SK-N-SH (cell line): ENCODE measurements at regions of chr1 and their contacts with region 1.

Region 1: GRCh38 chr1:214008791-214009620 is 21.2 kb downstream of the PROX1 start:
- DNase-seq: no peak
- H3K4me3 ChIP-seq: no peak overlapping the region
- H3K27ac ChIP-seq: peak overlapping the region; percentile 11 to 100; a peak in 3 of 4 replicates
- H3K4me1 ChIP-seq: peaks cover 0 to 50% of the 10 kb centered on the region in 2 experiments; a peak in 2 of 4 replicates
- H3K27me3 ChIP-seq: no peaks in the 10 kb centered on the region
- CTCF ChIP-seq: no peak
- EP300 ChIP-seq: no peak
- RAD21 ChIP-seq: no peak

Region 2: DNA sequence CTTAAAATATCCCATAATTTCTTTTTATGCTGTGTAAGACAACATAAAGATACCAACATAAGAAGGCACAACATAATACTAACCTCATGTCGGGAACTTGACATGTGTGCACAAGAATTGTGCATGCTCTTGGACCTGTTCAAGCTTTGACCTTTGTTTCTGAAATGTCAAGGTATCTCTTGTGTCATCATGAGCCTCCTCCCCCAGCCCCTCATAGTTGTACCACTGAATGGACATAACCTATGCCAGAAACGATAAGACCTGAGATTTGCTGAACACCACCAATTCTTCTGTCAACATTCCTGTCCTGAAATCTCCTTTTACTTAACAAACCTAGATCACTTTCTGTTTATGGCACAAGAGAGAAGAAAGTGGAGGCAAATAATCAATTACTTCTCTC is 50.7 kb before region 1 on chr1:
- CTCF ChIA-PET with region 1: no interaction called
- POLR2A ChIA-PET with region 1: no interaction called
- DNase-seq: no peak
- H3K4me3 ChIP-seq: no peak overlapping the region
- H3K27ac ChIP-seq: no peak overlapping the region
- H3K4me1 ChIP-seq: no peaks in the 10 kb centered on the region; a peak in 1 of 4 replicates
- H3K27me3 ChIP-seq: no peaks in the 10 kb centered on the region
- CTCF ChIP-seq: no peak
- EP300 ChIP-seq: no peak
- RAD21 ChIP-seq: no peak

Region 3: DNA sequence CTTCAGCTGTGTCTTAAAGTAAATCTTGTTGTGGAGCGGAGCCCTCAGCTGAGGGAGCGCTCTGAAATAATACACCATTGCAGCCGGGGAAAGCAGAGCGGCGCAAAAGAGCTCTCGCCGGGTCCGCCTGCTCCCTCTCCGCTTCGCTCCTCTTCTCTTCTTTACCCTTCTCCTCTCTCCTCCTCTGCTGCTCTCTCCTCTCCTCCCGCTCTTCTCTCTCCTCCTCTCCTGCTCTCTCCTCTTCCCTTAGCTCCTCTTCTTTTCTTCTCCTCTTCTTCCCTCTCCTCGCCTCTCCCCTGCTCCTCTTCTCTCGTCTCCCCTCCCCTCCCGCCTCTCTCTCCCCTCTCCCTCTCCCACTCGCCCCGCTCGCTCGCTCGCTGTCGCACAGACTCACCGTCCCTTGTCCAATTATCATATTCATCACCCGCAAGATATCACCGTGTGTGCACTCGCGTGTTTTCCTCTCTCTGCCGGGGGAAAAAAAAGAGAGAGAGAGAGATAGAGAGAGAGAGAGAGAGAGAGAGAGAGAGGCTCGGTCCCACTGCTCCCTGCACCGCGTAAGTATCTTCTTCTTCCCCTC is 21.0 kb before region 1 on chr1 and contains the start of gene PROX1:
- CTCF ChIA-PET with region 1: interaction called, 12 read pairs
- POLR2A ChIA-PET with region 1: interaction called, 21 read pairs
- DNase-seq: peak; percentile 67
- H3K4me3 ChIP-seq: peak within 1 kb of the TSS; percentile 67 to 75
- H3K27ac ChIP-seq: peak within 1 kb of the TSS; percentile 50 to 63
- H3K4me1 ChIP-seq: peaks cover 0 to 13% of the 10 kb centered on the region in 2 experiments; a peak in 3 of 4 replicates
- H3K27me3 ChIP-seq: peaks cover 25% of the 10 kb centered on the region
- CTCF ChIP-seq: no peak
- EP300 ChIP-seq: no peak
- RAD21 ChIP-seq: 0 out of 2 replicates have a peak, but pooled peaks have one; percentile 18
- polyA plus RNA-seq, gene PROX1: 0.25 and 0.45 TPM in 2 replicates

Region 4: GRCh38 chr1:213993929-213994328 is 15.1 kb before region 1 on chr1:
- CTCF ChIA-PET with region 1: interaction called, 12 read pairs
- POLR2A ChIA-PET with region 1: interaction called, 21 read pairs
- DNase-seq: peak; percentile 52
- H3K4me3 ChIP-seq: no peak overlapping the region
- H3K27ac ChIP-seq: peak overlapping the region in 1 of 2 experiments; percentile 63; a peak in 2 of 4 replicates
- H3K4me1 ChIP-seq: peaks cover 0 to 23% of the 10 kb centered on the region in 2 experiments; a peak in 2 of 4 replicates
- H3K27me3 ChIP-seq: peaks cover 11% of the 10 kb centered on the region
- CTCF ChIP-seq: no peak
- EP300 ChIP-seq: no peak
- RAD21 ChIP-seq: no peak

Region 5: GRCh38 chr1:214044438-214045214 is 35.6 kb after region 1 on chr1:
- CTCF ChIA-PET with region 1: no interaction called
- POLR2A ChIA-PET with region 1: no interaction called
- DNase-seq: no peak
- H3K4me3 ChIP-seq: no peak overlapping the region
- H3K27ac ChIP-seq: no peak overlapping the region
- H3K4me1 ChIP-seq: peaks cover 0 to 5% of the 10 kb centered on the region in 2 experiments; a peak in 2 of 4 replicates
- H3K27me3 ChIP-seq: no peaks in the 10 kb centered on the region
- CTCF ChIP-seq: no peak
- EP300 ChIP-seq: no peak
- RAD21 ChIP-seq: no peak